ENCODE measurements at regions of chr13 and their contacts with region 1.

Region 1: GRCh38 chr13:41652727-41653361 is 195.5 kb downstream of the RGCC start:
- DNase-seq: no peak
- ATAC-seq: peak; percentile 43 to 58
- H3K4me3 ChIP-seq: no peak overlapping the region
- H3K27ac ChIP-seq: peak overlapping the region; percentile 15 to 58 (median 24)
- H3K4me1 ChIP-seq: peaks cover 3 to 10% of the 10 kb centered on the region in 2 donors
- H3K27me3 ChIP-seq: no peaks in the 10 kb centered on the region
- CTCF ChIP-seq: peak; percentile 50 to 74 (median 55)
- POLR2A ChIP-seq: no peak

Region 2: DNA sequence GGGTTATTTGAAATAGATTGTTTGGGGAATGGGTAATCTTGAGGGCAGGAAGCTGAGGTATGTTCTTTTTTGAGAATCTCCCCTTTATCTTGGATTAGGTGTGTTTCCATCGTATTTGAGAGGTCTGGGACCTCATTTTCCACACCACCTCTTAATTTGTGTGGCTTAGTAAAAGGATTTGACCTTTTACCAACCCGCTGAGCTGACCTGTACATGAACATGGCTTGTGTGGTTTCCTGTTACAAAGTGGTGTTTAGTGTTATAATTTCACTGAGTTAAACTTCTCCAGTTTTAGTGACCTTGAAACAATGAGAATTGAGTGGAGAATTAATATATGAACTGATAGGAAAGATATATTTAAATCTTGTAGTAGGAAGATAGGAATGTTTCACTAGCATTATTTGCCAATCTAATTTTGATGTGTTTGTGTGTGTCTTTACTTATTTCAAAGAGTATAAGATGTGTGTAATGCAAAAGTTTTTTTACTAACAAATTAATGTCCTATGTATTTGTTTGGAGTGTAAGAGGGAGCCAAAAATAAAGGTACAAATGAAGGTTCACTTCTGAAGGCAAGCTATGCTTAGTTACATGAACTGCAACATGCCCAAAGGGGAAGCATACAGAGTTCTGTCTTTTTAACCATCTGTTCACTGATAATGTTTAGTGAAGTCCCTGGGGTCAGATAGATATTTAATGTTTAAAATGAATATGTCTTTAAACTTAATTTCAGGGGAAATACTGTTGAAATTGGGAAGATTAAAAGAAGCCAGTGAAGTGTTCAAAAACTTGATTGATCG is 324.7 kb before region 1 on chr13:
- in situ Hi-C with region 1: no loop called
- intact Hi-C with region 1: no loop called
- DNase-seq: no peak
- ATAC-seq: peak; percentile 29 to 52
- H3K4me3 ChIP-seq: peak overlapping the region in 1 of 4 donors; percentile 7
- H3K27ac ChIP-seq: peak overlapping the region; percentile 67 to 84 (median 78)
- H3K4me1 ChIP-seq: peaks cover 44 to 50% of the 10 kb centered on the region in 2 donors
- H3K27me3 ChIP-seq: no peaks in the 10 kb centered on the region
- CTCF ChIP-seq: no peak
- POLR2A ChIP-seq: no peak

Region 3: DNA sequence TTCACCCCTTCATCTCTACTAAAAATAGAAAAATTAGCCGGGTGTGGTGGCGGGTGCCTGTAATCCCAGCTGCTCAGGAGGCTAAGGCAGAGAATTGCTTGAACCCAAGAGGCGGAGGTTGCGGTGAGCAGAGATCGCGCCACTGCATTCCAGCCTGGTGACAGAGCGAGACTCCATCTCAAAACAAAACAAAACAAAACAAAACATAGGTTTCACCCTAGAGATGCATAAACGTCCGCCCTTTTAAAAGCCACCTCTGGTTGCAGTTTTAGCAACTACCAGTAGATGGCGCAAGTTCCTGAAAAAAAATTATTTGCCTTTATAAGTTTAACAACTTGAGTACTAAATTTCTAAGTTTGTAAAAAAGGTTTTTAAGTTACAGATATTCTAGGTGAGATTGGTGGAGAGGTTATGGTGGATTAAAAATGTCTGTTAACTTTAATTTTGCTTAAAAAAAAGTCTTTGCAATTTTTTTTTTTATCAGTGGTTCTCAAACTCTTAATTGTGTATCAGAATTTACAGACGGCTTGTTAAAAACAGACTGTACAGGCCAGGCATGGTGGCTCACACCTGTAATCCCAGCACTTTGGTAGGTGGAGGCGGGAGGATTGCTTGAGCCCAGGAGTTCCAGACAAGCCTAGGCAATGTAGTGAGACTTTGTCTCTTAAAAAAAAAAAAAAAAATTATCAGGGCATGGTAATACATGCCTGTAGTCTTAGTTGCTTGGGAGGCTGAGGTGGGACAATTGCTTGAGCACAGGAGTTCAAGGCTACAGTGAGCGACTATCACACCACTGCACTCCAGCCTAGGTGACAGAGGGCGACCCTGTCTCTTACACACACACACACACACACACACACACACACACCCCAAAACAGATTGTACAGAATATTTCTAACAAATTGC is 299.7 kb before region 1 on chr13:
- in situ Hi-C with region 1: loop called in 3 of 4 experiments (anchors 5 to 25 kb)
- intact Hi-C with region 1: loop called (anchors 1 kb)
- DNase-seq: no peak
- ATAC-seq: peak; percentile 30 to 58
- H3K4me3 ChIP-seq: no peak overlapping the region
- H3K27ac ChIP-seq: no peak overlapping the region
- H3K4me1 ChIP-seq: peaks cover 12 to 13% of the 10 kb centered on the region in 2 donors
- H3K27me3 ChIP-seq: no peaks in the 10 kb centered on the region
- CTCF ChIP-seq: peak; percentile 58 to 86 (median 72)
- POLR2A ChIP-seq: no peak

Region 4: GRCh38 chr13:41411522-41411921 is 241.3 kb before region 1 on chr13:
- in situ Hi-C with region 1: no loop called
- intact Hi-C with region 1: loop called (anchors 5 kb)
- DNase-seq: no peak
- ATAC-seq: no peak
- H3K4me3 ChIP-seq: no peak overlapping the region
- H3K27ac ChIP-seq: no peak overlapping the region
- H3K4me1 ChIP-seq: no peaks in the 10 kb centered on the region
- H3K27me3 ChIP-seq: no peaks in the 10 kb centered on the region
- CTCF ChIP-seq: no peak
- POLR2A ChIP-seq: no peak

Region 5: GRCh38 chr13:41456768-41457588 is 195.9 kb before region 1 on chr13 and contains the start of gene RGCC:
- in situ Hi-C with region 1: loop called in 2 of 4 experiments (anchors 25 kb)
- intact Hi-C with region 1: loop called (anchors 2 kb)
- DNase-seq: peak; percentile 17 to 45
- ATAC-seq: peak; percentile 53 to 72
- H3K4me3 ChIP-seq: peak within 1 kb of the TSS; percentile 66 to 76 (median 70)
- H3K27ac ChIP-seq: peak within 1 kb of the TSS; percentile 47 to 70 (median 62)
- H3K4me1 ChIP-seq: peaks cover 4 to 11% of the 10 kb centered on the region in 2 donors
- H3K27me3 ChIP-seq: peaks cover 18 to 36% (median 25%) of the 10 kb centered on the region in 3 donors
- CTCF ChIP-seq: no peak
- POLR2A ChIP-seq: peak in 1 of 2 donors; percentile 82
- total RNA-seq, gene RGCC: 56.1 to 135 (median 92.0) TPM

Region 6: DNA sequence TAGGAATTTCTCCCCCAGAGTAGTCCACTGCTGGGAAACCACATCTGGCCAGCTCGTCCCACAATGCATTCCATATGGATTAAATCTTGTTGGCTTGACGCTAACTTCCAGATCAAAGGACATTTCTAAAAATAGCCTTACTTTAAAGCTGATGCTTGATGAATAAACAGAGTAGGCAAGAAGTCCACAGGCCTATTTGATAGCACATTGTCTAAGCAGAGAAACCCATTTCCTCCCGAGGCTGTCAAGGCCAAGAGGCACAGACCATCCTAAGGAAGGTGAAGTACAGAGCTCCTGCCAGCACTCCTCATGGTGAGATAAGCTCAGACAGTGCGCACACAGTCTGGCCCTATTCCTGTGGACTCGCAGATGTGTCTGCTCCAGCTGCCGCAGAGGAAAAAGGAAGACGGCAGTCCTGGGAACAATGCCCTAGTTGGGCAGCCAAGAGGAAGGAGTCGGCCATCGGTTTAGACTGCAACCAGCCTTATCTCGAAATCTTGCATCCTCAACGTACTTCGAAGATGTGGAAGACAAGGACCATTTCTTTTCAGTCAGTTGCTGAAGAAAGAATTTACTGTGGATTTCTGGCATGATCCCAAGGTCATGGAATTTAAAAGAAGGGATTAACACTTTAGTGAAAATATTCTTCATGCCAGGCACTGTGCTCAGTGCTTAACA is 38.7 kb before region 1 on chr13:
- in situ Hi-C with region 1: no loop called
- intact Hi-C with region 1: loop called (anchors 5 kb)
- DNase-seq: peak in 1 of 2 donors; percentile 29
- ATAC-seq: peak; percentile 69 to 72
- H3K4me3 ChIP-seq: no peak overlapping the region
- H3K27ac ChIP-seq: peak overlapping the region; percentile 30 to 61 (median 58)
- H3K4me1 ChIP-seq: peaks cover 16 to 22% of the 10 kb centered on the region in 2 donors
- H3K27me3 ChIP-seq: no peaks in the 10 kb centered on the region
- CTCF ChIP-seq: no peak
- POLR2A ChIP-seq: no peak

Measured in gastrocnemius medialis (tissue), 4 donors.